HCT116 (cell line): ENCODE measurements at regions of chr1 and their contacts with region 1.

Region 1: GRCh38 chr1:157201767-157202166 is 63.6 kb upstream of the ETV3 start:
- DNase-seq: no peak
- ATAC-seq: no peak
- H3K4me3 ChIP-seq: no peak overlapping the region
- H3K27ac ChIP-seq: no peak overlapping the region
- H3K4me1 ChIP-seq: no peaks in the 10 kb centered on the region
- H3K27me3 ChIP-seq: peaks cover 12% of the 10 kb centered on the region
- CTCF ChIP-seq: no peak
- POLR2A ChIP-seq: no peak
- RAD21 ChIP-seq: no peak

Region 2: DNA sequence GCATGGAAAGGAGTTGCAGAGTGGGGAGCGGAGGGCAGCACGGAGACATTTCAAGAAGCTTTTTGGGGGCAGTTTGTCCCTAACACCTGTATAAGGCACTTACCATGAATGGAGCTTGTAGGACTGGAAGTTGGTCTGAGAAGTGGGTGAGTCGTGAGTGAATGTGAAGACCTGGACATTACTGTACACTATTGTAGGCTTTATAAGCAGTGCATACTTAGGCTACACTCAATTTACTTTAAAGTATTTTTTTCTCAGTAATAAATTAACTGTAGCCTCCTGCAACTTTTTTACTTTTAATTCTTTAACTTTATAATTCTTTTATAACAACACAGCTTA is 78.0 kb after region 1 on chr1:
- CTCF ChIA-PET with region 1: no interaction called
- POLR2A ChIA-PET with region 1: no interaction called
- RAD21 ChIA-PET with region 1: no interaction called
- intact Hi-C with region 1: loop called (anchors 2 kb)
- DNase-seq: no peak
- ATAC-seq: no peak
- H3K4me3 ChIP-seq: no peak overlapping the region
- H3K27ac ChIP-seq: no peak overlapping the region
- H3K4me1 ChIP-seq: no peaks in the 10 kb centered on the region
- H3K27me3 ChIP-seq: peaks cover 56% of the 10 kb centered on the region
- CTCF ChIP-seq: no peak
- POLR2A ChIP-seq: no peak
- RAD21 ChIP-seq: no peak